ENCODE measurements at regions of chr11 and their contacts with region 1.

Region 1: DNA sequence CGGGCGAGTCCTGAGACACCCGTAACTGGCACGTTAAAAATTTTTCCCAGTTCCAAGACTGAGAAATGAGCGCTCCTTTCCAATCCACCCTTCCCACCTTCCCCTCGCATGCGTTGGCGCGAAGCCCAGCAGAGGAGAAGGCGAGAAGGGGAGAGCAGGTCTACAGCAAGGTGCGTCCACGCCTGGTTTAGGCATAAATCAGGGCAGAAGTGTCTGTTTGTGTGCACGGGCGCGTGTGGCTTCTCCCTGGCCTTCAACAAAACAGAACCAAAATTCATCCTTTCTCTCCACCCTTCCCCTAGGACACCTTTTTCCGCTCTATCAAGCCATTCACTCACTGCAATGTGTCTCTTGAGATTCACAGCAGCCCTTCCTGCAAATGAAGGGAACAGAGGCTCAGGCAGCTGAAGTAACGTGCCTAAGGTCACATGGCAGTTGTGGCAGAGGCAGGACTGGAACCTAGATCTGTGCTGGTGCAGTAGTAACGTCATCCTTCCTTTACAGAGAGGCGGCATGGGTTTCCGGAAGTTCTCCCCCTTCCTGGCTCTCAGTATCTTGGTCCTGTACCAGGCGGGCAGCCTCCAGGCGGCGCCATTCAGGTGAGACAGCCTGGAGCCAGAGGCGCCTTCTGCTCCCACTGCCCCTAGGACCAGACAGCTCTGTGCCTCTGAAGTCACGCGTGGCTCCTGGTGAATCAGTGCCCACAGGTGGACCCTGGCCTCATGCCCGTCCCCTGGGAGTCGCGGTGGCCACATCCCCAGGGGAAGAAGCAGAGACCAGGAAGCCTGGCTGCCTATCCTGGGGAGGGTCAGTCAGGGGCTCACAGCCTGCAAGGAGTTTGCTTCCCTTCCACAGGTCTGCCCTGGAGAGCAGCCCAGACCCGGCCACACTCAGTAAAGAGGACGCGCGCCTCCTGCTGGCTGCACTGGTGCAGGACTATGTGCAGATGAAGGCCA is 1.1 kb downstream of the CALCB start:
- H3K4me3 ChIP-seq: peak overlapping the region; percentile 38
- H3K27ac ChIP-seq: no peak overlapping the region; the same call in 1 of the 2 replicates
- H3K4me1 ChIP-seq: no peaks in the 10 kb centered on the region
- CTCF ChIP-seq: peak; percentile 86

Region 2: DNA sequence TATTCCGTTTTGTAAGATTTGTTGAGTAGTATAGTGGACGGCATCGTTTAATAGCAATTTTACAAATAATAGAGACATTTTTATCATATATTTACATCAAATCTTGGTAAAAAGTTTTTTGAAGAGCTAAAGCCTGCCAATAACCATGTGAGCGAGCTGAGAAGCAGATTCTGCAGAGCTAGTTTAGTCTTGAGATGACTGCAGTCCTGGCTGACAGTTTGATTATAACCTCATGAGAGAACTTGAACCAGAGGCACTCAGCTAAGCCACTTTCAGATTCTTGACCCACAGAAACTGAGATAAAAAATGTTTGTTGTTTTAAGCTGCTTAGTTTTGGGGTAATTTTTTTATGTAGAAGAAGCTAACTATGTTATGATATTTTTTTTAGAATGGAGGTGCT is 352.0 kb before region 1 on chr11:
- CTCF ChIA-PET with region 1: no interaction called
- POLR2A ChIA-PET with region 1: no interaction called
- H3K4me3 ChIP-seq: no peak overlapping the region
- H3K27ac ChIP-seq: no peak overlapping the region
- H3K4me1 ChIP-seq: 0 out of 2 replicates have a peak, but pooled peaks cover under 1% of the 10 kb centered on the region
- CTCF ChIP-seq: no peak

Region 3: GRCh38 chr11:14789879-14790484 is 284.5 kb before region 1 on chr11:
- CTCF ChIA-PET with region 1: interaction called, 15 read pairs
- POLR2A ChIA-PET with region 1: no interaction called
- H3K4me3 ChIP-seq: no peak overlapping the region
- H3K27ac ChIP-seq: no peak overlapping the region
- H3K4me1 ChIP-seq: no peaks in the 10 kb centered on the region
- CTCF ChIP-seq: no peak

Region 4: GRCh38 chr11:14980854-14981253 is 93.6 kb before region 1 on chr11:
- CTCF ChIA-PET with region 1: interaction called, 36 read pairs
- POLR2A ChIA-PET with region 1: interaction called, 3 read pairs
- H3K4me3 ChIP-seq: no peak overlapping the region
- H3K27ac ChIP-seq: no peak overlapping the region
- H3K4me1 ChIP-seq: no peaks in the 10 kb centered on the region
- CTCF ChIP-seq: no peak

Region 5: DNA sequence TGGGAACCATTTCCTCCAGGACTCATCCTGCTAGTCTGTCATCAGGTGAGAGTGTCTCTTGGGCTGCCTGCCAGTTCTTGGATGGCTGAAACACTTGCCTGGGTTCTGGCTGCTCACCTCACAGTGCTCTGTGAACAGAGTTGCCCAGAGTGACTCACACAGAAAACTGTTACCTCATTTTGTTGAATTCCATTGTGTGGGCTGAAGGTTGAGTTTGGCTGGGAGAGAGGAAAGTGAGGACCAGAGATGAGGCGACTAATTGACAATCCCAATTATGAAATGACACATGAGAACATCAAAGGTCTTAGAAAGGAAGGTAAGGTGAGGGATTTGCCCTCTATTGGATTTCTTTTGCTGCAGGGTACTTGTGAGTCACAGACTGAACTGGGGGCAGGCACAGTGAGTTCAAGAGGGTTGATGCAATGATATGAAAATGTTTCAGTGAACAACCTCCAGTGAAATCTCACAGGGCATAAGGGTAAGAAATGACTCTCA is 21.2 kb before region 1 on chr11:
- CTCF ChIA-PET with region 1: interaction called, 14 read pairs
- POLR2A ChIA-PET with region 1: no interaction called
- H3K4me3 ChIP-seq: no peak overlapping the region
- H3K27ac ChIP-seq: no peak overlapping the region
- H3K4me1 ChIP-seq: no peaks in the 10 kb centered on the region
- CTCF ChIP-seq: no peak

Region 6: GRCh38 chr11:15093432-15093831 is 18.9 kb after region 1 on chr11:
- CTCF ChIA-PET with region 1: interaction called, 22 read pairs
- POLR2A ChIA-PET with region 1: no interaction called
- H3K4me3 ChIP-seq: no peak overlapping the region
- H3K27ac ChIP-seq: no peak overlapping the region
- H3K4me1 ChIP-seq: no peaks in the 10 kb centered on the region
- CTCF ChIP-seq: no peak

Region 7: GRCh38 chr11:15166204-15166603 is 91.7 kb after region 1 on chr11:
- CTCF ChIA-PET with region 1: no interaction called
- POLR2A ChIA-PET with region 1: no interaction called
- H3K4me3 ChIP-seq: no peak overlapping the region
- H3K27ac ChIP-seq: no peak overlapping the region
- H3K4me1 ChIP-seq: no peaks in the 10 kb centered on the region
- CTCF ChIP-seq: no peak

Region 8: GRCh38 chr11:15208378-15209222 is 134.1 kb after region 1 on chr11:
- CTCF ChIA-PET with region 1: interaction called, 13 read pairs
- POLR2A ChIA-PET with region 1: no interaction called
- H3K4me3 ChIP-seq: no peak overlapping the region
- H3K27ac ChIP-seq: no peak overlapping the region
- H3K4me1 ChIP-seq: no peaks in the 10 kb centered on the region
- CTCF ChIP-seq: peak; percentile 86

Region 9: GRCh38 chr11:15446929-15447328 is 372.4 kb after region 1 on chr11:
- CTCF ChIA-PET with region 1: no interaction called
- POLR2A ChIA-PET with region 1: no interaction called
- H3K4me3 ChIP-seq: no peak overlapping the region
- H3K27ac ChIP-seq: no peak overlapping the region
- H3K4me1 ChIP-seq: no peaks in the 10 kb centered on the region
- CTCF ChIP-seq: no peak

Measured in HEK293 (cell line).